ENCODE measurements at regions of chr7 and their contacts with region 1.

Region 1: DNA sequence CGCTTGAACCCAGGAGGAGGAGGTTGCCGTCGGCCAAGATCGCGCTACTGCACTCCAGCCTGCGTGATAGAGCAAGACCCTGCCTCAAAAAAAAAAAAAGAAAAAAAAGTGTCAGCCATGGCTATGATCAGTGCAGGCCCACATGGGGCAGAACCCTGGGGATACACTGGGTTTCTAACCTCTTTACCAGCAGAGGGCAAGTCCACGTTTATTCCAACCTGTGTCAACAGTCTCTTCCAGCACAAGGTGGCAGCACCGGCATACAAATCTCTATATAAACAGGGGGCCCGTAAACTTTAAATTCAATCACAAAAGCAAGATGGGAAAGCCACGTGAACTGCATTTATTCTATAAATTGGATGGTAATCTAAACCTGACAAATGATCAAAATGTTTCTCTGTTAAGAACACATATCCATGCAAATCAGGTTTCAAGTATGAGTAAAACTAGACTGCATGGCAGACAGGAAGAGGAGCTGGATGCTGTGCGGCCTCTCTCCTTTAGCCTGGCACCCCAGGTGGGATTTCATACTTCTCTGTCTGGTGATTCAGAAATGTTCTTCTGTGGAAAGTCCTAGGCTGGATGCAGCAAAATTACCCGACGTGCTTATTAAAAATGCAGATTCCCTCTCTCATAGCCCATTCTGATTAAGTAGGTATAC is 60.0 kb upstream of the STEAP1B start:
- DNase-seq: no peak
- H3K4me3 ChIP-seq: no peak overlapping the region
- H3K27me3 ChIP-seq: no peaks in the 10 kb centered on the region
- CTCF ChIP-seq: peak; percentile 88

Region 2: GRCh38 chr7:22577396-22578001 is 17.5 kb after region 1 on chr7:
- CTCF ChIA-PET with region 1: interaction called, 16 read pairs
- POLR2A ChIA-PET with region 1: interaction called, 3 read pairs
- DNase-seq: peak; percentile 96
- H3K4me3 ChIP-seq: no peak overlapping the region
- H3K27me3 ChIP-seq: no peaks in the 10 kb centered on the region
- CTCF ChIP-seq: no peak

Region 3: DNA sequence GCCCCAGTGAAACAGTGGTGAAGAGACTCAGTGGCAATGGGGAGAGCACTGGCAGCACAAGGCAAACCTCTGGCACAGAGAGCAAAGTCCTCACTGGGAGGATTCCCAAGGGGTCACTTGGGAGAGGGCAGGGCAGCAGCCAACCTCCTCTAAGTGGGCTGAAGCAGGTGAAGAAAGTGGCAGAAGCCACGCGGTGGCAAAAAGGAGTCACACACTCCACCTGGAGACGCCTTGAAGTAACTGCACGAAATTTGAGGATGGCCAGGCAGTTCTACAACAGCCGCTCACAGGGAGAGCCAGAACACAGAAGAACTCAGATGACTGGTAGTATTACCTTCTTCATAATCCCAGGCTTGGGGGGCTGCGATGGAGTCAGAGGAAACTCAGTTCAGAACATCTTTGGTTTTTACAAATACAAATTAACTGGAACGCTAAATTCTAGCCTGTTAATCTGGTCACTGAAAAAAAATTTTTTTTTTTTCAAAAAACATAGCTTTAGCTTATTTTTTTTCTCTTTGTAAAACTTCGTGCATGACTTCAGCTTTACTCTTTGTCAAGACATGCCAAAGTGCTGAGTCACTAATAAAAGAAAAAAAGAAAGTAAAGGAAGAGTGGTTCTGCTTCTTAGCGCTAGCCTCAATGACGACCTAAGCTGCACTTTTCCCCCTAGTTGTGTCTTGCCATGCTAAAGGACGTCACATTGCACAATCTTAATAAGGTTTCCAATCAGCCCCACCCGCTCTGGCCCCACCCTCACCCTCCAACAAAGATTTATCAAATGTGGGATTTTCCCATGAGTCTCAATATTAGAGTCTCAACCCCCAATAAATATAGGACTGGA is 166.6 kb after region 1 on chr7:
- CTCF ChIA-PET with region 1: interaction called, 129 read pairs
- POLR2A ChIA-PET with region 1: interaction called, 7 read pairs
- DNase-seq: peak; percentile 79
- H3K4me3 ChIP-seq: peak overlapping the region; percentile 62
- H3K27me3 ChIP-seq: no peaks in the 10 kb centered on the region
- CTCF ChIP-seq: peak; percentile 68

Region 4: DNA sequence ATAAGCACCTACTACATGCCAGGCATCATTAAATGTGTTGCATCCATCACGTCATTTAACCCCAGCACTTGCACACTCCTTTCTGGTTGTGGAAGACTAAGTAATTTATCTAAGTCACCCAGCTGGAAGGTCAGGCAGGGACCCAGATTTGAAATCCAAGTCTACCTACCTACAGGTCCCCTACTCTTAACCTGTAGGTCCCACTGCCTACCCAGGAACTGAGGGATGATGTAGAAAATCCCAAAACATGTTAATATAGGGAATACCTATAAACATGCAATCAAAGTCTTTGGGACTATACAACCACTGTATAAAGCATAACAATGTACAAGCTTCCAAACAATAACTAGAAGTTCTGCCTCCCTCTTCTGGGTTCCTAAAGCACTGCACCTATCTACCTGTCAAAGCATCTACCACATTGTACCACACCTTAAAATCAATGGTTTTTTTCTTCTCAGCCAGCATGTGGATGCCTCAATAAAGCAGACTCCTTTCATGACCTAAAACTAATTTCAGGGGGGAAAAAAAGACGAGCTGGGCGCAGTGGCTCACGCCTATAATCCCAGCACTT is 172.7 kb after region 1 on chr7:
- CTCF ChIA-PET with region 1: interaction called, 129 read pairs
- POLR2A ChIA-PET with region 1: no interaction called
- DNase-seq: no peak
- H3K4me3 ChIP-seq: no peak overlapping the region
- H3K27me3 ChIP-seq: no peaks in the 10 kb centered on the region
- CTCF ChIP-seq: 0 out of 2 replicates have a peak, but pooled peaks have one; percentile 14

Region 5: GRCh38 chr7:22782616-22783232 is 222.8 kb after region 1 on chr7:
- CTCF ChIA-PET with region 1: interaction called, 30 read pairs
- POLR2A ChIA-PET with region 1: no interaction called
- DNase-seq: no peak
- H3K4me3 ChIP-seq: no peak overlapping the region
- H3K27me3 ChIP-seq: no peaks in the 10 kb centered on the region
- CTCF ChIP-seq: peak; percentile 68

Measured in BJ (cell line).